Posterior vena cava (tissue), 2 donors: ENCODE measurements at regions of chr3 and their contacts with region 1.

Region 1: GRCh38 chr3:25856902-25857518 is 67.1 kb downstream of the OXSM start:
- DNase-seq: no peak

Region 2: DNA sequence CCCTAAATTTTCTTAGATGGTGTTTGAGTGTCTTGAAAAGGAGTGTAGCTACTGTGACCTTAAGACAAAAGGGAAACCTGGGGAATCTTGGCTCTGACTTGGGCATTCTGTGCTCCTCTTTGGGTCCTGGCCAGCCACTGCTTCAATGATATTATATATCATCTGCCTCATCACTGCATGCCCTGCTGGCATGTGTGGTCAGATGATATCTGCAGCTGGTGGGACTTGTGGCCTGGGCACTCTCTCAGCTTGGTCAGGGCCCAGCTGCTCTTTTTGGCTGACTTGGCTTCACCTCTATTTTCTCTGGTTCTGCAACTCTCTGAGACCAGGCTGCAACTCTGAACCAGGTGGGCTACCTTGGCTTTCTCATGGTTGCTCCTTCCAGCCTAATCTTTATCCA is 875.1 kb before region 1 on chr3:
- intact Hi-C with region 1: no loop called
- DNase-seq: no peak

Region 3: GRCh38 chr3:25747033-25747432 is 110.0 kb before region 1 on chr3:
- intact Hi-C with region 1: no loop called
- DNase-seq: no peak

Region 4: GRCh38 chr3:25899352-25900101 is 42.5 kb after region 1 on chr3:
- intact Hi-C with region 1: loop called in 1 of 2 experiments (anchors 2 kb)
- DNase-seq: no peak

Region 5: GRCh38 chr3:26550413-26550812 is 693.4 kb after region 1 on chr3:
- intact Hi-C with region 1: no loop called
- DNase-seq: no peak

Region 6: GRCh38 chr3:26703519-26703918 is 846.5 kb after region 1 on chr3:
- intact Hi-C with region 1: loop called in 1 of 2 experiments (anchors 10 kb)
- DNase-seq: no peak

Region 7: DNA sequence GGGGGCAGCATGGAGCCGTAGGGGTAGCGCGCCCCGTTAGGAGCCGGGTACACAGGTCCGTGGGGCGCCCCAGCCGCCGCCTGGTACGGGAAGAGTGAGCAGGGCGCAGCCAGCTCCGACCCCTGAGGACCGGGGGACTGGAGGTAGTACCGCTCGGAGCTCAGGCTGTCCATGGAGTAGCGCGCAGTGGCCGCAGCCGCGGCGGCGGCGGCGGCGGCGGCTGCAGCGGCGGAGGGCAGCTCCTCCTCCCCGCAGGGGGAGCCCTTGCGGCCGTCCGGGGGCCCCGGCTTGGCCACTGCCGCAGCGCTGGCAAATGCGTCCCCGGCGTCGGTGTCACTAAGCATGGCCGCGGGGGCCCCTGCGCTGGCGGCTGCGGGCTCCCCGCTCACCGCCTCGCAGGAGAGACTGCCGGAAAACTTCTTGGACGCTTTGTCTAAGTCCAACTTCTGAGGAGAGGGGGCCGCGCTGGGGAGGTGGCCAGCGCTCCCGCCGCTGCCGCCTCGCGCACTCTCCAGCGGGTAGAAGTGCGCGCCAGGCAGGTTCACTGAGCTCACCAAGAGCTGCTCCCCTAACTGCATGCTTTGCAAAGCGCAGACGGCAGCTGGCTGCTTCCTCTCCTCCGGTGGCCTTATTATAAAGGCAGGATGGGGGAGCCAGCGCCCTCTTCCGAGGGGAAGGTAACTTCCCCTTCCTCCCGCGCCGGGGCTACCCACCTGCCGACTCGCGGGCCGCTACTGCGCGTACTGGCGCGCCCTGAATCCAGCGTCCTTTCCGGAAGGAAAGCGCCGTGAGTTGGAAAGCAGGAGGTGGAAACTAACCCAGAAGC is 1864.9 kb after region 1 on chr3 and contains the start of gene EOMES:
- intact Hi-C with region 1: no loop called
- DNase-seq: peak; percentile 83
- total RNA-seq, gene EOMES: 0.24 to 0.32 TPM